ENCODE measurements at regions of chr14 and their contacts with region 1.

Region 1: DNA sequence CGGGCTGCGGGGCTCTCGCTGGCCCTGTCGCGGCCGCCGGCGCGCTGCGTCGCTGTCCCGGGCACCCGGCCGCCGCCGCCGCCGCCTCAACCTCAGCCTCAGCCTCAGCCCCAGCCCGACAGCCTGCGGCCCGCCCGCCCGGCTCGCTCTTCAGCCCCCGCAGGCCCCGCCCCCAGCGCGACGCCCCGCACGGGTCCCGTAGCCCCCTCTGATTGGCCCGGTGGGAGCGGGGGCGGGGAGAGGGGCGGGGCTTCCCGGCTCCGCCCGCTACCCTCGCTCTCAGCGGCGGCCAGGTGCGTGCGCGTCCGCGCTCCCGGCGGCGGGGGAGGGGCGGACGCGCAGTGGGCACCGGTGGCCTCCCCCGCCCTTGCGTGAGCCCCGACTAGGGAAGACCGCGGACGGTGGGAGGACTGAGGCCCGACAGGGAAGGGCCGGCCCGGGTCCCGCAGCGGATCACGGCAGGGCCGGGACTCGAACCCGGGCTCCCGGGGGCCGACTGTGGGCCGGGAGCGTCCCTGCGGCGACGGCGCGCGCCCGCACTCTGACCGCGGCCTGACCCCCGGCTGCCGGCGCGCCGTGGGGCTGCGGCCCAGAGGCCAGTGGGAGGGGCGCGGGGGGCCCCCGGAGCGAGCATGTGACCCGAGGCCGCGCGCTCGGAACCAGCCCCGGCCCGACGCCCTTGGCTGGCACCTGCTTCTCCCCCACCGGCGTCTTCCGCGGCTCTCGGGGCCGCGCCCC is at the start of gene PPP1R13B:
- DNase-seq: peak; percentile 87 to 95
- H3K4me3 ChIP-seq: peak within 1 kb of the TSS; percentile 54 to 88
- H3K27ac ChIP-seq: peak within 1 kb of the TSS; percentile 79
- H3K4me1 ChIP-seq: peaks cover 0 to 21% (median 14%) of the 10 kb centered on the region in 4 donors
- H3K27me3 ChIP-seq: no peaks in the 10 kb centered on the region
- CTCF ChIP-seq: no peak

Region 2: DNA sequence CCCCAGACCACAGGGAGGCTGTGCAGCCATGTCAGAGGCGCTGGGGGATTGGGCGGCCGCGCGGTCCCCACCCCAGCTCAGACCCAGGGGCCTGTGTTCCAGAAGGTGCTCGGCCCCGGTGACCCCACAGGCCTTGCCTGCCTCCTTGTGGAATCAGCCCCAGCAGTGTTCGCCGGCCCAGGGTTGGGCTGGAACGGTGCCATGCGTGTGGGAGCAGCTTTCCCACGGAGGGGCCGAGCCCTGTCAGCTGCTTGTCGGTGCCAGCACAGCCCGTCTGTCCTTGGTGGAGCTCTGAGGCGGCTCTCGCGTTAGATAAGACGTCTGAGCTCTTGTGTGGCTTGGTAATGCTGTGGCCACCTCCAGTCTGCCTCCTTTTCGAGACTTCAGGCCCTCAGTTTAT is 123.5 kb before region 1 on chr14:
- intact Hi-C with region 1: no loop called
- DNase-seq: peak; percentile 72 to 94
- H3K4me3 ChIP-seq: peak overlapping the region; percentile 20 to 24
- H3K27ac ChIP-seq: peak overlapping the region; percentile 86 to 91
- H3K4me1 ChIP-seq: peaks cover 3 to 68% (median 55%) of the 10 kb centered on the region in 4 donors
- H3K27me3 ChIP-seq: no peaks in the 10 kb centered on the region
- CTCF ChIP-seq: peak; percentile 19 to 22

Region 3: DNA sequence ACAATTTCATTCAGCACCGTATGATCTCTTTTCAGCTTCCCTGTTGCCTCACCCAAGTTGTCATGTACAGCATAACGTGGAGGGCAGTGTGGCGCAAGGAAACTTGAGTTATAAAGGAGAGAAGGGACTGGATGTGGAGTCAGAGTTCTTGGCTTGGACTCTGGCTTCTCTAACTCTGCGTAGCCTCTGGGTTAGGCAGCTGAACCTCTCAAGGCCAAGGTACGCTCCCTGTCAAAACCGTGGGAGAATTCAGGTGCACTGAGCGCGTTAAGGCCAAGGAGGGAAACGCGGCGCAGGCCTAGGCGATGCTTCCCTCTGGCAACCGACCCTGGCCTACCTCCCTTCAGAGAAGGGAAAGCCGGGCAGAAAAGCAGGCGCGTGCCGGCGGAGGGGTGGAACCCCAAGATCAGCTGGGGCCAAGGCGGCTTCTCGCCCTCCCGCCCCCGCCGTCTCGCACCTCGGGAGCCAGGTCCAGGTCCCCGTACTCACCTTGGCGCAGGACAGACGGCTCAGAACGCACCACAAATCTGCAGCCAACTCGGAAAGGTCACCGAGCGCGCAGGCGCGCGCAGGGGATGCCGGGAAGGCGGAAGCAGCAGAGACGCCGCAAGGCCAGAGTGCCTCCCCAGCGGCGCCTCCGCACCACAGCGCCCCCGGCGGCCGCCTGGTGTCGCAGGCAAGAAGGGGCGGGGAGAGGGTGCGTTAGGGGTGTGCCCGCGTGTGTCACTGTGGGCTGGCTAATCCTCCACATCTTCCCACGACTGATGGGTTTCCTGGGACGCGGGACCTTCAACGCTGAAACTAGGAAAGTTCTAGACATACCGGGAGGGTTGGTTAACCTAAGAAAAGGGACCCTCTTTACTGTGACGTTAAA is 73.6 kb after region 1 on chr14:
- intact Hi-C with region 1: loop called (anchors 5 kb)
- DNase-seq: peak; percentile 86 to 94
- H3K4me3 ChIP-seq: peak overlapping the region; percentile 75 to 82
- H3K27ac ChIP-seq: peak overlapping the region; percentile 72 to 78
- H3K4me1 ChIP-seq: peaks cover 4 to 35% (median 20%) of the 10 kb centered on the region in 4 donors
- H3K27me3 ChIP-seq: peaks cover 0 to 16% of the 10 kb centered on the region in 2 donors
- CTCF ChIP-seq: peak; percentile 94 to 99

Measured in tibial artery (tissue), 4 donors.